CD4-positive, alpha-beta memory T cell (primary cell): ENCODE measurements at regions of chr20 and their contacts with region 1.

Region 1: GRCh38 chr20:45095753-45096371 is 5.1 kb downstream of the KCNS1 start:
- DNase-seq: peak; percentile 52 to 64 (median 61)
- H3K4me3 ChIP-seq: no peak overlapping the region
- H3K4me3 Mint-ChIP-seq: peak overlapping the region in 1 of 8 donors; percentile 51
- H3K27ac ChIP-seq: no peak overlapping the region
- H3K27ac Mint-ChIP-seq: peak overlapping the region in 2 of 7 donors; percentile 25 to 57
- H3K4me1 ChIP-seq: peaks cover 11% of the 10 kb centered on the region
- H3K4me1 Mint-ChIP-seq: peaks cover 3 to 19% (median 13%) of the 10 kb centered on the region in 4 donors
- H3K27me3 ChIP-seq: peaks cover 27% of the 10 kb centered on the region
- H3K27me3 Mint-ChIP-seq: peaks cover 26 to 35% of the 10 kb centered on the region in 2 donors

Region 2: GRCh38 chr20:44747166-44748004 is 348.5 kb before region 1 on chr20:
- CTCF ChIA-PET with region 1: interaction called, 13 read pairs
- POLR2A ChIA-PET with region 1: no interaction called
- intact Hi-C with region 1: no loop called
- DNase-seq: peak; percentile 27 to 57 (median 43)
- H3K4me3 ChIP-seq: no peak overlapping the region
- H3K4me3 Mint-ChIP-seq: peak overlapping the region in 6 of 8 donors; percentile 34 to 58 (median 47)
- H3K27ac ChIP-seq: no peak overlapping the region
- H3K27ac Mint-ChIP-seq: no peak overlapping the region
- H3K4me1 ChIP-seq: peaks cover 5% of the 10 kb centered on the region
- H3K4me1 Mint-ChIP-seq: peaks cover 7 to 13% (median 11%) of the 10 kb centered on the region in 4 donors
- H3K27me3 ChIP-seq: peaks cover 11% of the 10 kb centered on the region
- H3K27me3 Mint-ChIP-seq: peaks cover 12 to 19% of the 10 kb centered on the region in 2 donors

Region 3: DNA sequence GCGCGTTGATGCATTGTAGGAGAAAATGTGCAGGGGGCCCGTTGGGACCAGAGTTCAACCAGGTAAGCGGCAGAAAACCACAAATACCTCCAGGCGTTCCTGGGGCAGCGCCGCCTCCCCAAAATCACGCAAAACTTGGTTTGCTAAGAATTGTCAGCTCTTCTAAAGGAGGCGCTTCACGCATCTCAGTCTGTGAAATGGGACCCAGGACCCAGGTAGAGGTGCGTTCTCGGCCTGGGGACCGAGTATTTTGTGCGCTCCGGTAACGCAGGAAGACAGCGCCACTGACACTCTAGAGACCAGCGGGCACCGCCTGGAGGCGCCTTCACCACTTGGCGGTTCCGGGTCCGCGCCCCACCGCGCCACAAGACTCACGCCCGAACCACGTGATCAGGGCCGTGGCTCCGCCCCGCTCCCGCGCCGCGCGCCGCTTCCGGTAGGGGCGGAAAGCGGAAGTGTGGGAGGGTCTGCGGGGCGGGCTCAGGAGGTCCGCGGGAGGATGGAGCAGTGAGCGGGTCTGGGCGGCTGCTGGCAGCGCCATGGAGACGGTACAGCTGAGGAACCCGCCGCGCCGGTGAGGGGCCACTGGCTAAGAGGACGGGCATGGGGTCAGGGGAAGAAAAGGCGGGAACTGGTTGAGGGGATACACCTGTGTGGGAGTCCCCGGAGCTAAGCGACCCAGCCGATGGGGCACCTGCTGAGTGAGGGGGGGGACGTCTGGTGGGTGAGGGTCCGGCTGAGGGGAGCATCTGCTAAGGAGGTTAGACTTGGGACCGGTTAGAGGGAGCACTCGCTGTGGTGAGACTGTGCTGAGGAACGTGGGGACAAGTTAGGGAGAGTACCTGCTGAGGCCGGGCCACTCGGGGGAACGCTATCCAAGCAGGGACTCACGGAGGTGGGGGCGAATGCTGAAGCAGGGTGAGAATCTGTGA is 129.6 kb before region 1 on chr20 and contains the start of gene STK4:
- CTCF ChIA-PET with region 1: interaction called, 28 read pairs
- POLR2A ChIA-PET with region 1: interaction called, 5 read pairs
- intact Hi-C with region 1: loop called (anchors 2 kb)
- DNase-seq: peak; percentile 93 to 98 (median 96)
- H3K4me3 ChIP-seq: peak within 1 kb of the TSS; percentile 87 to 96
- H3K4me3 Mint-ChIP-seq: peak within 1 kb of the TSS; percentile 93 to 100 (median 98)
- H3K27ac ChIP-seq: peak within 1 kb of the TSS; percentile 89
- H3K27ac Mint-ChIP-seq: peak within 1 kb of the TSS; percentile 89 to 96 (median 91)
- H3K4me1 ChIP-seq: peaks cover 38% of the 10 kb centered on the region
- H3K4me1 Mint-ChIP-seq: peaks cover 28 to 73% (median 38%) of the 10 kb centered on the region in 4 donors
- H3K27me3 ChIP-seq: no peaks in the 10 kb centered on the region
- H3K27me3 Mint-ChIP-seq: no peaks in the 10 kb centered on the region
- total RNA-seq, gene STK4: 358 to 374 TPM

Region 4: DNA sequence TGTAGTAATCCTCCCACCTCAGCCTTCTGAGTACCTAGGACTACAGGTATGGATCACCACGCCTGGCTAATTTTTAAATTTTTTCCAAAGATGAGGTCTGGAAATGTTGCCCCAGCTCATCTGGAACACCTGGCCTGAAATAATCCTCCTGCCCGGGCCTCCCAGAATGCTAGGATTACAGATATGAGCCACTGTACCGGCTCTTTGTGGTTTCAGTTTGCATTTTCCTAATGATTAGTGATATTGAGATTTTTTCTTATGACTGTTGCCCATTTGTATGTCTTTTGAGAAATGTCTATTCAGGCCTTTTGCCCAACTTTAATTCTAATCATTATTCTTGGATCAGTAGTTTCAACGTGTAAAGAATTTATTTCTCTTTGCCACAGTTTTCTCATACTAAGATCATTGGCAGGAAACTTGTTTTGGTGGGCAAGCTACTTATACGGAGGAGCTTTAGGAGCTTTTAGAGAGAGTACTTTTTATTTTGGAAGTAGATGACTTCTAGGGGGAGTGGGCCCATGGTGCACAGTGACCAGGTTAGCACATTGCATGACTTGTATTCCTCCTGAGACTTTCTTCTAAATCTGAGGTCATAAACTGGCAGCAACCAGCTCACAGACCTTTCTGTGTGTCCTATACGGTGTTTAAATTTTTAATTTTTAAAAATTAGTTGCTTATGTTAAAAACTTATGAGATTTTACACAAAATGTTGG is 67.3 kb before region 1 on chr20:
- CTCF ChIA-PET with region 1: interaction called, 12 read pairs
- POLR2A ChIA-PET with region 1: no interaction called
- intact Hi-C with region 1: no loop called
- DNase-seq: no peak
- H3K4me3 ChIP-seq: no peak overlapping the region
- H3K4me3 Mint-ChIP-seq: peak overlapping the region in 7 of 8 donors; percentile 0 to 77 (median 63)
- H3K27ac ChIP-seq: no peak overlapping the region
- H3K27ac Mint-ChIP-seq: peak overlapping the region; percentile 53 to 90 (median 68)
- H3K4me1 ChIP-seq: peaks cover 88% of the 10 kb centered on the region
- H3K4me1 Mint-ChIP-seq: peaks cover 48 to 80% (median 64%) of the 10 kb centered on the region in 4 donors
- H3K27me3 ChIP-seq: no peaks in the 10 kb centered on the region
- H3K27me3 Mint-ChIP-seq: no peaks in the 10 kb centered on the region

Region 5: GRCh38 chr20:45052698-45053429 is 43.0 kb before region 1 on chr20:
- CTCF ChIA-PET with region 1: interaction called, 16 read pairs
- POLR2A ChIA-PET with region 1: interaction called, 3 read pairs
- intact Hi-C with region 1: no loop called
- DNase-seq: peak; percentile 15 to 34 (median 21)
- H3K4me3 ChIP-seq: no peak overlapping the region
- H3K4me3 Mint-ChIP-seq: peak overlapping the region in 7 of 8 donors; percentile 6 to 63 (median 31)
- H3K27ac ChIP-seq: peak overlapping the region; percentile 5
- H3K27ac Mint-ChIP-seq: peak overlapping the region; percentile 24 to 84 (median 68)
- H3K4me1 ChIP-seq: peaks cover 86% of the 10 kb centered on the region
- H3K4me1 Mint-ChIP-seq: peaks cover 62 to 89% (median 78%) of the 10 kb centered on the region in 4 donors
- H3K27me3 ChIP-seq: no peaks in the 10 kb centered on the region
- H3K27me3 Mint-ChIP-seq: no peaks in the 10 kb centered on the region

Region 6: DNA sequence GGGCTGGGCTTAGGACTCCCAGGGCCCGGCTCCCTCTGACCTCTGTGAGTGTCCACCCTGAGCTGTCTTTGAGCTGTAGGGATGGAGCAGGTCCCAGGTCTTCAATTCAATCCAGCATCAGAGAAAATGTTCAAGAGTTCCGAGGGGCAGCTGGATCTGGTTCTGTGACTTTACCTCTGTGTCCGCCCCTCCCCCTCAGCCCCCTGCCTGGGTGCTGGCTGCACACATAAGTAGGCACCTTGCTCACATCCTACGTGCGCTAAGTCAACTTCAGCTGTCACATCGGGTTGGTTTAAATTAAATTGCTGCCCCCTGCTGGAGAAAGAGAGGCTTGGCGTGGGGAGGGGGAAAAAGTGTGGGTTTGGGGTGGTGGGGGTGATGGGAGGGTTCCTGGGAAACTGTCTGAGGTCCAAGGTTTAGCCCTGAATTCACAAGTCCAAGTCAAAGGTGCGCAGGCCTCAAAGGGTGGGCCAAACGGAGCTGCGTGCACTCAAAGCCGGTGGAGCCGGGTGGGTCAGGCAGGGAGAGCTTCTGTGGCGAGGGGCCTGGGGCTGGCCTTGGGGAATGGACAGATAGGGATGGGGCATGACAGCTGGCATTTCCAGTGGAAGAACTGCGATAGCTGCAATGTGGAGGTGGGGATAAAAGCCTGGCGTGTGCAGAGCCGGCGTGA is 16.1 kb after region 1 on chr20:
- CTCF ChIA-PET with region 1: interaction called, 32 read pairs
- POLR2A ChIA-PET with region 1: no interaction called
- intact Hi-C with region 1: no loop called
- DNase-seq: no peak
- H3K4me3 ChIP-seq: no peak overlapping the region
- H3K4me3 Mint-ChIP-seq: no peak overlapping the region
- H3K27ac ChIP-seq: no peak overlapping the region
- H3K27ac Mint-ChIP-seq: no peak overlapping the region
- H3K4me1 ChIP-seq: peaks cover 4% of the 10 kb centered on the region
- H3K4me1 Mint-ChIP-seq: peaks cover 0 to 6% (median 2%) of the 10 kb centered on the region in 4 donors
- H3K27me3 ChIP-seq: no peaks in the 10 kb centered on the region
- H3K27me3 Mint-ChIP-seq: peaks cover 2 to 3% of the 10 kb centered on the region in 2 donors